AG04449 (cell line): ENCODE measurements at regions of chr17 and their contacts with region 1.

Region 1: GRCh38 chr17:15157051-15157450 is 108.1 kb downstream of the PMP22 start:
- DNase-seq: no peak
- H3K4me3 ChIP-seq: no peak overlapping the region
- CTCF ChIP-seq: no peak

Region 2: GRCh38 chr17:14300575-14301278 is 856.3 kb before region 1 on chr17 and contains the start of gene HS3ST3B1:
- CTCF ChIA-PET with region 1: interaction called, 11 read pairs
- POLR2A ChIA-PET with region 1: interaction called, 7 read pairs
- DNase-seq: peak; percentile 99
- H3K4me3 ChIP-seq: peak within 1 kb of the TSS; percentile 98
- CTCF ChIP-seq: peak; percentile 23

Region 3: GRCh38 chr17:15143524-15143923 is 13.5 kb before region 1 on chr17:
- CTCF ChIA-PET with region 1: interaction called, 11 read pairs
- POLR2A ChIA-PET with region 1: no interaction called
- DNase-seq: no peak
- H3K4me3 ChIP-seq: no peak overlapping the region
- CTCF ChIP-seq: no peak

Region 4: GRCh38 chr17:15171167-15172047 is 14.4 kb after region 1 on chr17:
- CTCF ChIA-PET with region 1: interaction called, 37 read pairs
- POLR2A ChIA-PET with region 1: no interaction called
- DNase-seq: no peak
- H3K4me3 ChIP-seq: no peak overlapping the region
- CTCF ChIP-seq: peak; percentile 98

Region 5: DNA sequence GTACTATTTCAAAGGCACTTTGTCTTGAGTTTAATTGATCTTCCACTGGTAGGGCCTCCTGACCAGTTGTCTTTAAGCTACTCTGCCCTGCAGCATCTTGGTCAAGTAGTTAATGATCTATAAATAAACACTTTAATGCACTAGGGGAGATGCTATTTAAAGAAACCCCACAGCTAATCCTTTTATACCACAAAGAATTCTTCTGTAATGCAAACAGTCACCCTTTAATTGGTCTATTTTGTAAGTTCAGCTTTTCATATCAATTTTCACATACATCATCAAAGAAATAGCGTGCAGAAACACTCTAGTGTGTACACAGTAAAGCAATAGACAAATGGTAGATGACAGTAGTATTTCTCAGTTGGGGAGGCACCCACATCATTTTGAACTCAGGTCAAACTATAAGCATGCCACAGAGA is 37.8 kb after region 1 on chr17:
- CTCF ChIA-PET with region 1: no interaction called
- POLR2A ChIA-PET with region 1: no interaction called
- DNase-seq: peak; percentile 59
- H3K4me3 ChIP-seq: no peak overlapping the region
- CTCF ChIP-seq: no peak